Caco-2 (cell line): ENCODE measurements at regions of chr10 and their contacts with region 1.

Region 1: DNA sequence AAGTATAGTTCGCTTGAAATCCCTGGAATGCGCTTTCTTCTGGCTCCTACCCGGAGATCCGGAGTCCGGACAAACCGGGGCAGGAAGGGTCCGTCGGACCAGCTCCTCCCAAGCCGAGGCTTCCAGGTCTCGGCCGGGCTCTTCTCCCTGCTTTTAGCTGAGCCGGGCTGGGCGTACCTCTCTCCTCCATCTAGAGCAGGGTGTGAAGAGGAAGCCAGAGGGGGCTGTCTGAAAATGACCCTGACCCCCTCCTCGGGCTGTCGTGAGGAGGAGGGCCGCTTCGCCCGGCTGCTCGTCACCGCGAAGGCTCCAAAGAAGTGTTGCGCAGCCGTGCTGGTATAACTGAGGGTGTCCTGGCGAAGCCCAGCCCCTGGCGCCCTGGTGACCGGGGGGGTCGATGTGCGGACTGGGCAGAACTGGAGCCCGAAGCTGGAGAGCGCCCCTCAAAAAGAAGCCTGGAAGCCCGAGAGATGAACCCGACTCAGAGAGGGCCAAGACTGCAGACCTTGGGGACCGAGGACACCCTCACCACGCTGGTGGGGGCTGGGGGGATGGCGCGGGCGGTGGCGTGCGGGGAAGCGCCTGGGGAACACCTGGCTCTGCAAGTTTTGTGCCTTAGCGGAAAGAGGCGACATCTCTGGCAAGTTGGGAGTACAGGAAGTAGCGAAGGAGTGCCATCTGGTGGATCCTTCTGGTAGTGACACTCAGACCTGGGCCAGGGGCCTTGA is 5.7 kb downstream of the KAZALD1 start:
- DNase-seq: peak; percentile 90
- H3K4me3 ChIP-seq: peak overlapping the region; percentile 70
- H3K4me3 Mint-ChIP-seq: peak overlapping the region; percentile 96
- H3K27ac Mint-ChIP-seq: peak overlapping the region; percentile 98
- H3K4me1 ChIP-seq: peaks cover 30% of the 10 kb centered on the region
- H3K4me1 Mint-ChIP-seq: peaks cover 22% of the 10 kb centered on the region
- H3K27me3 ChIP-seq: no peaks in the 10 kb centered on the region
- H3K27me3 Mint-ChIP-seq: no peaks in the 10 kb centered on the region
- CTCF ChIP-seq: peak; percentile 86 to 92

Region 2: DNA sequence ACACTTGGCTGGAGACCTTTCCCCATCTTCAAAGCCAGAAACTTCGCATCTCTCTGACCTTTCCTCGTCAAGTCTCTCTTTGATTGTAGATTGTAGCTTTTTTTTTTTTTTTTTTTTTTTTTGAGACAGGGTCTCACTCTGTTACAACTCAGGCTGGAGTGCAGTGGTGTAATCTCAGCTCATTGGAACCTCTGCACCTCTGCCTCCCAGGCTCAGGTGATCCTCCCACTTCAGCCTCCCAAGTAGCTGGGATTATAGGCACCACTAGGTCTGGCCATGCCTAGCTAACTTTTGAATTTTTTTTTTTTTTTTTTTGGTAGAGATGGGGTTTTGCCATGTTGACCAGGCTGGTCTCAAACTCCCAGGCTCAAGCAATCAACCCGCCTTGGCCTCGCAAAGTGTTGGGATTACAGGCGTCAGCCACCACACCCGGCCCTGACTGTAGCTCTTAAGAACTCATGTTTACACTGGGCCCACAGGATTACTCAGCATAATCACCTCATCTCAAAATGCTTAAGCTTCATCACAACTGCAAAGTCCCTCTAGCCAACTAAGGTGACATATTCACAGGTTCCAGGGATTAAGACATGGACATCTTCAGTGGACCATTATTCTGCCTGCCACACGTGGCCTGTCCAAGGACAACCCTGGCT is 508.8 kb after region 1 on chr10:
- CTCF ChIA-PET with region 1: interaction called, 10 read pairs
- POLR2A ChIA-PET with region 1: no interaction called
- intact Hi-C with region 1: no loop called
- DNase-seq: no peak
- H3K4me3 ChIP-seq: no peak overlapping the region
- H3K4me3 Mint-ChIP-seq: no peak overlapping the region
- H3K27ac Mint-ChIP-seq: no peak overlapping the region
- H3K4me1 ChIP-seq: no peaks in the 10 kb centered on the region
- H3K4me1 Mint-ChIP-seq: no peaks in the 10 kb centered on the region
- H3K27me3 ChIP-seq: no peaks in the 10 kb centered on the region
- H3K27me3 Mint-ChIP-seq: no peaks in the 10 kb centered on the region
- CTCF ChIP-seq: no peak